Naive thymus-derived CD4-positive, alpha-beta T cell (primary cell): ENCODE measurements at regions of chrX and their contacts with region 1.

Region 1: DNA sequence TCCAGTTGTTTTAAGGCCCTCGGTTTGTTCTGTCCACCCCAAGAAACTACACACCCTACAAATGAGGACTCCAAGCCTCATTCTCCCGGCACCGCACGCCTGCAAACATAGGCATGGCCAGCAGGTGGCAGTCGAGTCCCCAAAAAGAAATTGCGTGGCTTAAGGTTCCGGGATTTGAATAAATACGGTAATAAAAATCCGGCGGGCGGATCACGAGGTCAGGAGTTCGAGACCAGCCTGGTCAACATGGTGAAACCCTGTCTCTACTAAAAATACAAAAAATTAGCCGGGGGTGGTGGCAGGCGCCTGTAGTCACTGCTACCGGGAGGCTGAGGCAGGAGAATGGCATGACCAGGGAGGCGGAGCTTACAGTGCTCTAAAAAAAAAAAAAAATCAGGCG is 21.8 kb upstream of the CSF2RA start:
- DNase-seq: peak; percentile 55 to 88 (median 77)
- ATAC-seq: peak; percentile 81
- H3K4me3 ChIP-seq: no peak overlapping the region
- H3K4me3 Mint-ChIP-seq: peak overlapping the region in 9 of 10 donors; percentile 4 to 72 (median 63)
- H3K27ac ChIP-seq: no peak overlapping the region
- H3K27ac Mint-ChIP-seq: peak overlapping the region; percentile 44 to 84 (median 80)
- H3K4me1 ChIP-seq: peaks cover 6 to 18% of the 10 kb centered on the region in 2 donors
- H3K4me1 Mint-ChIP-seq: peaks cover 6 to 45% (median 38%) of the 10 kb centered on the region in 7 donors
- H3K27me3 ChIP-seq: no peaks in the 10 kb centered on the region
- H3K27me3 Mint-ChIP-seq: peaks cover 0 to 2% (median 0%) of the 10 kb centered on the region in 5 donors

Region 2: DNA sequence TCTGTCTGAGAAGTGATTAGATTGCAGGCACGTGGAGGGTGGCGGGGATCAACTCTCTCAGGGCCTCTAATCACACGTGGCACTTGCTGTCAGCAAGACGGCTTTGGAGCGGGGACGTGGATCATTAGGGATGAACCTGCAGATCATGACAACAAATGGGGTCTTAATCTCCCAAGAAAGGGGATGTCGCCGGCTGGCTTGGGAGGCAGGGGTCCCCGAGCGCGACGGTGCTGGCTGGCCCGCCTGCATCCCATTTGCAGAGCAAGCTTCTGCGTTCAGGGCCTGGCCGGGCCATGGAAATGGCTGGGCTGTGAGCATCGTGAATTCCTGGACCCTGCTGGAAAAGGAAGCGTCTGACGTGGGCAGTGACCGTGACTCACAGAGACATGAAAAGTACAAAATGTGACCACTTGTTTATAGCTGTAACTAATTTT is 701.3 kb before region 1 on chrX:
- CTCF ChIA-PET with region 1: no interaction called
- POLR2A ChIA-PET with region 1: no interaction called
- intact Hi-C with region 1: no loop called
- DNase-seq: no peak
- ATAC-seq: no peak
- H3K4me3 ChIP-seq: no peak overlapping the region
- H3K4me3 Mint-ChIP-seq: no peak overlapping the region
- H3K27ac ChIP-seq: no peak overlapping the region
- H3K27ac Mint-ChIP-seq: no peak overlapping the region
- H3K4me1 ChIP-seq: no peaks in the 10 kb centered on the region
- H3K4me1 Mint-ChIP-seq: no peaks in the 10 kb centered on the region
- H3K27me3 ChIP-seq: no peaks in the 10 kb centered on the region
- H3K27me3 Mint-ChIP-seq: peaks cover 0 to 4% (median 0%) of the 10 kb centered on the region in 5 donors

Region 3: GRCh38 chrX:1231850-1232465 is 14.9 kb before region 1 on chrX:
- CTCF ChIA-PET with region 1: no interaction called
- POLR2A ChIA-PET with region 1: no interaction called
- intact Hi-C with region 1: loop called in 1 of 2 experiments (anchors 1 kb)
- DNase-seq: peak in 7 of 9 donors; percentile 24 to 60 (median 54)
- ATAC-seq: peak; percentile 67
- H3K4me3 ChIP-seq: peak overlapping the region; percentile 23
- H3K4me3 Mint-ChIP-seq: peak overlapping the region in 8 of 10 donors; percentile 55 to 73 (median 62)
- H3K27ac ChIP-seq: no peak overlapping the region
- H3K27ac Mint-ChIP-seq: peak overlapping the region in 5 of 9 donors; percentile 6 to 65 (median 41)
- H3K4me1 ChIP-seq: peaks cover 0 to 14% of the 10 kb centered on the region in 2 donors
- H3K4me1 Mint-ChIP-seq: peaks cover 6 to 41% (median 22%) of the 10 kb centered on the region in 7 donors
- H3K27me3 ChIP-seq: no peaks in the 10 kb centered on the region
- H3K27me3 Mint-ChIP-seq: peaks cover 0 to 5% (median 0%) of the 10 kb centered on the region in 5 donors

Region 4: GRCh38 chrX:1323315-1323714 is 76.5 kb after region 1 on chrX:
- CTCF ChIA-PET with region 1: no interaction called
- POLR2A ChIA-PET with region 1: no interaction called
- intact Hi-C with region 1: loop called in 1 of 2 experiments (anchors 2 kb)
- DNase-seq: peak; percentile 20 to 50 (median 40)
- ATAC-seq: peak; percentile 77
- H3K4me3 ChIP-seq: no peak overlapping the region
- H3K4me3 Mint-ChIP-seq: peak overlapping the region in 2 of 10 donors; percentile 41 to 50
- H3K27ac ChIP-seq: no peak overlapping the region
- H3K27ac Mint-ChIP-seq: peak overlapping the region in 2 of 9 donors; percentile 44 to 76
- H3K4me1 ChIP-seq: no peaks in the 10 kb centered on the region
- H3K4me1 Mint-ChIP-seq: peaks cover 0 to 19% (median 4%) of the 10 kb centered on the region in 7 donors
- H3K27me3 ChIP-seq: no peaks in the 10 kb centered on the region
- H3K27me3 Mint-ChIP-seq: peaks cover 0 to 16% (median 4%) of the 10 kb centered on the region in 5 donors

Region 5: GRCh38 chrX:1355131-1356046 is 108.6 kb after region 1 on chrX:
- CTCF ChIA-PET with region 1: no interaction called
- POLR2A ChIA-PET with region 1: no interaction called
- intact Hi-C with region 1: no loop called
- DNase-seq: no peak
- ATAC-seq: peak; percentile 32
- H3K4me3 ChIP-seq: no peak overlapping the region
- H3K4me3 Mint-ChIP-seq: no peak overlapping the region
- H3K27ac ChIP-seq: peak overlapping the region; percentile 41
- H3K27ac Mint-ChIP-seq: peak overlapping the region in 4 of 9 donors; percentile 43 to 80 (median 50)
- H3K4me1 ChIP-seq: no peaks in the 10 kb centered on the region
- H3K4me1 Mint-ChIP-seq: peaks cover 0 to 16% (median 8%) of the 10 kb centered on the region in 7 donors
- H3K27me3 ChIP-seq: no peaks in the 10 kb centered on the region
- H3K27me3 Mint-ChIP-seq: no peaks in the 10 kb centered on the region

Region 6: DNA sequence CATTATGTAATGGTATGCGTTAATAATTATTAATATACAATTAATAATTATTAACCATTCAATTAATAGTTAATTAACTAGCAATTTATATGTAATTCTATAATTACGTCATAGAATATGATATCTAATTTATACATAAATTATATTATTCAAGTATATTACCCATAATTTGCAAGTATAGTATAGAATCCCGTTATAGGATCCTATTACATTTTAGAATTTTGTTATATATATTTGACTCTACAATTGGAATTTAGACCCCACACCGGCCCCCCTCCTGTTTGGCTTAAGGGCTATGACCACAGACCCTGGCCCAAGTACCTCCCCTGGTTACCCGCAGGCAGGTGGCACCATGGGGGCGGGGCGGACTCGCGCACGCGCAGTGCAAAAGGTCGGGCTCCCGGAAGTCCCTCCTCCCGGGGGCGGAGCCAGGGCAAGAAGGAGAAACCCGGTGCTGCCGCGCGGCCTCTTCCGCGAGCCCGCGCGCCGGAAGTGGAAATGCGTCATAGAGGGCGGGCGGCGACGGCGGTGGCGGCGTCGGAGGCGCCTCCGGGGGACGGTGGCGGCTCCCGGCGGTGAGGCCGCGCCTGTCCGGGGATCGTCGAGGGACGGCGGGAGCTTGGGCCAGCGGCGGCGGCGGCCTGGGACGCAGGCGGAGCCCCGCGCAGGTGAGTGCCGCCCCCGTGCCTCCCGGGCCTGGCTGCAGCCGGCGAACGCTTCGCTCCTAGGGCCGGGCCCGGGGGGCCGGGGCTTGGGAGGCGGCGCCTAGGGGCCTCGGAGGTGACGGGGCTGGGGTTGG is 344.5 kb after region 1 on chrX and contains the start of gene AKAP17A:
- CTCF ChIA-PET with region 1: no interaction called
- POLR2A ChIA-PET with region 1: no interaction called
- intact Hi-C with region 1: loop called (anchors 2 to 5 kb)
- DNase-seq: peak; percentile 92 to 100 (median 99)
- ATAC-seq: peak; percentile 95
- H3K4me3 ChIP-seq: peak within 1 kb of the TSS; percentile 76
- H3K4me3 Mint-ChIP-seq: peak within 1 kb of the TSS; percentile 85 to 97 (median 91)
- H3K27ac ChIP-seq: peak within 1 kb of the TSS; percentile 91
- H3K27ac Mint-ChIP-seq: peak within 1 kb of the TSS; percentile 82 to 94 (median 91)
- H3K4me1 ChIP-seq: peaks cover 7 to 10% of the 10 kb centered on the region in 2 donors
- H3K4me1 Mint-ChIP-seq: peaks cover 5 to 50% (median 34%) of the 10 kb centered on the region in 7 donors
- H3K27me3 ChIP-seq: no peaks in the 10 kb centered on the region
- H3K27me3 Mint-ChIP-seq: no peaks in the 10 kb centered on the region
- total RNA-seq, gene AKAP17A: 75.7 to 165 (median 125) TPM

Region 7: GRCh38 chrX:2608638-2609430 is 1362.0 kb after region 1 on chrX:
- CTCF ChIA-PET with region 1: no interaction called
- POLR2A ChIA-PET with region 1: no interaction called
- intact Hi-C with region 1: loop called in 1 of 2 experiments (anchors 5 kb)
- DNase-seq: peak; percentile 69 to 89 (median 79)
- ATAC-seq: peak; percentile 99
- H3K4me3 ChIP-seq: peak overlapping the region; percentile 89
- H3K4me3 Mint-ChIP-seq: peak overlapping the region; percentile 90 to 96 (median 93)
- H3K27ac ChIP-seq: peak overlapping the region; percentile 71
- H3K27ac Mint-ChIP-seq: peak overlapping the region; percentile 51 to 93 (median 86)
- H3K4me1 ChIP-seq: peaks cover 9 to 17% of the 10 kb centered on the region in 2 donors
- H3K4me1 Mint-ChIP-seq: peaks cover 39 to 72% (median 56%) of the 10 kb centered on the region in 7 donors
- H3K27me3 ChIP-seq: no peaks in the 10 kb centered on the region
- H3K27me3 Mint-ChIP-seq: no peaks in the 10 kb centered on the region